Caco-2 (cell line): ENCODE measurements at regions of chr18 and their contacts with region 1.

Region 1: DNA sequence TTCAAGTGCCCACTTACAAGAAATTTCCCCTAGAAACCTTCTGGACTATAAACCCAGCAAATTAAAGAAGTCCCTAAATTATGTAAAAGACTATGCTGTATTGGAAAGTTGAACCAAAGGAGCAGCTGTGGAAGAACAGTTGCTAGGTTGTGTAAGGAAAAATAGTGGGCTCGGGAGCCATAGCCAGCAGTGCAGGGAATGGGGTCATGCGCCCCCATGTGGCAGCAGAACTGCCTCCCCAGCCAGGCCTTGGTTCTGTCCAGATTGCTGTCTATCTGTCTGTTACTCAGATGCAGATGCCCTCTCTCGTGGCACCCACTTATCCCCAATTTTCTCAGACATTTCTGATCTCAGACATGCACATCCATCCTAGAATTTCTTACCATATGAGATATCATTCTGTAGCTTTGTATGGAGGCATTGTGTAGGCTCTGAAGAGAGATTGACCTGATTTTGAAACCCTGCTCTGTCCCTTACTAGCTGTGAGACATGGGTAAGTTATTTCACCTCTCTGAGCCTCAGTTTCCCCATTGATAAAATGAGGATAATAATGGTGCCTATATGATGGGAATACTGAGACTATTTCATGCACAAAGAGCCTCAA is 258.3 kb downstream of the SS18 start:
- DNase-seq: peak; percentile 34 to 44
- H3K4me3 ChIP-seq: no peak overlapping the region
- H3K4me3 Mint-ChIP-seq: no peak overlapping the region
- H3K27ac Mint-ChIP-seq: no peak overlapping the region
- H3K4me1 ChIP-seq: no peaks in the 10 kb centered on the region
- H3K4me1 Mint-ChIP-seq: no peaks in the 10 kb centered on the region
- H3K27me3 ChIP-seq: no peaks in the 10 kb centered on the region
- H3K27me3 Mint-ChIP-seq: no peaks in the 10 kb centered on the region
- CTCF ChIP-seq: peak; percentile 42 to 69

Region 2: GRCh38 chr18:24878289-24878688 is 953.8 kb before region 1 on chr18:
- CTCF ChIA-PET with region 1: no interaction called
- POLR2A ChIA-PET with region 1: no interaction called
- intact Hi-C with region 1: loop called (anchors 5 kb)
- DNase-seq: peak in 1 of 2 experiments; percentile 18
- H3K4me3 ChIP-seq: no peak overlapping the region
- H3K4me3 Mint-ChIP-seq: no peak overlapping the region
- H3K27ac Mint-ChIP-seq: no peak overlapping the region
- H3K4me1 ChIP-seq: no peaks in the 10 kb centered on the region
- H3K4me1 Mint-ChIP-seq: no peaks in the 10 kb centered on the region
- H3K27me3 ChIP-seq: no peaks in the 10 kb centered on the region
- H3K27me3 Mint-ChIP-seq: no peaks in the 10 kb centered on the region
- CTCF ChIP-seq: no peak

Region 3: DNA sequence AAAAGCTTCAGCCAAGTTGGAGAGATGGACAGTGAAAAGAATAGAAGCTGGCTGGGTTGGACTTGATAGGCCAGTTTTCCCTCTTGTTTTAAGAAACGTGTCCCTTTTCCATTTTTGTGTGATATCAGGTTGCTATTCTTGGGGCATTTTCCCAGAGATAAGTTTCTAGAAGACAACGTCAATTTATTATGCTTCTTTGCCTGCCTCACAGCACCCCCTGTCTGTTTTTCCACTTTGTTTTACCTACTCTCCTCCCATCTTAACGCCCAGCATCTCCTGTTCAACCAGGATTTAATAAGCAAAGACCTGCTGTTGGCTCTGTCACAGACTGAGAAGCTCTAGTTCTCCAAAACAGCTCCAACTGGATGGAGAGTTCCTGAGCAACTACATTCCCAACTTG is 162.4 kb before region 1 on chr18:
- CTCF ChIA-PET with region 1: no interaction called
- POLR2A ChIA-PET with region 1: no interaction called
- intact Hi-C with region 1: loop called (anchors 5 kb)
- DNase-seq: no peak
- H3K4me3 ChIP-seq: no peak overlapping the region
- H3K4me3 Mint-ChIP-seq: no peak overlapping the region
- H3K27ac Mint-ChIP-seq: no peak overlapping the region
- H3K4me1 ChIP-seq: no peaks in the 10 kb centered on the region
- H3K4me1 Mint-ChIP-seq: no peaks in the 10 kb centered on the region
- H3K27me3 ChIP-seq: no peaks in the 10 kb centered on the region
- H3K27me3 Mint-ChIP-seq: peaks cover 12% of the 10 kb centered on the region
- CTCF ChIP-seq: no peak

Region 4: GRCh38 chr18:25985707-25986394 is 153.7 kb after region 1 on chr18:
- CTCF ChIA-PET with region 1: no interaction called
- POLR2A ChIA-PET with region 1: no interaction called
- intact Hi-C with region 1: no loop called
- DNase-seq: no peak
- H3K4me3 ChIP-seq: no peak overlapping the region
- H3K4me3 Mint-ChIP-seq: no peak overlapping the region
- H3K27ac Mint-ChIP-seq: no peak overlapping the region
- H3K4me1 ChIP-seq: no peaks in the 10 kb centered on the region
- H3K4me1 Mint-ChIP-seq: no peaks in the 10 kb centered on the region
- H3K27me3 ChIP-seq: no peaks in the 10 kb centered on the region
- H3K27me3 Mint-ChIP-seq: peaks cover 9% of the 10 kb centered on the region
- CTCF ChIP-seq: no peak